Right lobe of liver (tissue), 6 donors: ENCODE measurements at regions of chr11 and their contacts with region 1.

Region 1: DNA sequence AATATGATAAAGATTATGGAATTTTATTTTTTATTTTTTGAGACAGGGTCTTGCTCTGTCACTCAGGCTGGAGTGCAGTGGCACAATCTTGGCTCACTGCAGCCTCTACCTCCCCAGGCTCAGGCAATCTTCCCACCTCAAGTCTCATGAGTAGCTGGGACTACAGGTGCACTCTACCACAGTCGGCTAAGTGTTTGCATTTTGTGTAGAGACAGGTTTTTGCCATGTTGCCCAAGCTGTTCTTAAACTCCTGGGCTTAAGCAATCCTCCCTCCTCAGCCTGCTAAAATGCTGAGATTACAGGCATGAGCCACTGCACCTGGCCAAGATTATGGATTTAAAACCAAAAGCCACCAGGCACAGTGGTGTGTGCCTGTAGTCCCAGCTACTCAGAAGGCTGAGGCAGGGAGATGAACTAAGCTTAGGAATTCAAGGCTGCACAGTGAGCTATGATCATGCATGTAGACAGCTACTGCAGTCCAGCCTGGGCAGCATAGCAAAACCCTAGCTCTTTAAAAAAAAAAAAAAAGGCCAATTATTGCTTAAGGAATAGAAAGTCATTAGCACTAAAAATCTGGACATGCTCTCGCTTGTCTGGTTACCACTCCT is 20.2 kb upstream of the CCND1 start:
- DNase-seq: no peak
- ATAC-seq: no peak
- H3K4me3 ChIP-seq: no peak overlapping the region
- H3K27ac ChIP-seq: no peak overlapping the region
- H3K4me1 ChIP-seq: no peaks in the 10 kb centered on the region
- H3K27me3 ChIP-seq: no peaks in the 10 kb centered on the region
- CTCF ChIP-seq: no peak
- POLR2A ChIP-seq: no peak

Region 2: GRCh38 chr11:69471329-69472052 is 149.3 kb before region 1 on chr11:
- intact Hi-C with region 1: loop called in 1 of 2 experiments (anchors 10 kb)
- DNase-seq: peak in 1 of 3 donors; percentile 15
- ATAC-seq: no peak
- H3K4me3 ChIP-seq: no peak overlapping the region
- H3K27ac ChIP-seq: no peak overlapping the region
- H3K4me1 ChIP-seq: peaks cover 0 to 29% (median 8%) of the 10 kb centered on the region in 4 donors
- H3K27me3 ChIP-seq: no peaks in the 10 kb centered on the region
- CTCF ChIP-seq: no peak
- POLR2A ChIP-seq: no peak